MCF 10A (cell line): ENCODE measurements at regions of chr3 and their contacts with region 1.

Region 1: DNA sequence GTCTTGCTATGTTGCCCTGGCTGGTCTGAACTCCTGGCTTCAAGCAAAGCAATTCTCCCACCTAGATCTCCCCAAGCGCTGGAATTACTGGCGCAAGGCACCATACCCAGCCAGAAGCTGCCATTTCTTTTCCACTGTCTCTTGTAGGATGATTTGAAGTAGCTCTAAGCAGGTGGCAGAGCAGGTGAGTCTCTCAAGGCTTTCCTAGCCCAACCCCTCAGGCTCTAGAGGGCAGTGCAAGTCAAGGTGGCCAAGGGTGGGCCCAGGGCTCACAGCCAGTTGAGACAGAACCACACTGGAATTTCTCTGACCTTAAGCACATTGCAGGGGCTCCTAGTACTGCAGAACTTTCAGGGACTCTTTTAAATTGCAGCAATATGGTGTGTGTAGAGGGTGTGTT is 15.6 kb upstream of the DAG1 start:
- DNase-seq: peak; percentile 68
- H3K4me3 Mint-ChIP-seq: no peak overlapping the region
- H3K27ac Mint-ChIP-seq: no peak overlapping the region
- H3K4me1 Mint-ChIP-seq: peaks cover 10% of the 10 kb centered on the region
- H3K27me3 Mint-ChIP-seq: no peaks in the 10 kb centered on the region
- CTCF ChIP-seq: no peak

Region 2: DNA sequence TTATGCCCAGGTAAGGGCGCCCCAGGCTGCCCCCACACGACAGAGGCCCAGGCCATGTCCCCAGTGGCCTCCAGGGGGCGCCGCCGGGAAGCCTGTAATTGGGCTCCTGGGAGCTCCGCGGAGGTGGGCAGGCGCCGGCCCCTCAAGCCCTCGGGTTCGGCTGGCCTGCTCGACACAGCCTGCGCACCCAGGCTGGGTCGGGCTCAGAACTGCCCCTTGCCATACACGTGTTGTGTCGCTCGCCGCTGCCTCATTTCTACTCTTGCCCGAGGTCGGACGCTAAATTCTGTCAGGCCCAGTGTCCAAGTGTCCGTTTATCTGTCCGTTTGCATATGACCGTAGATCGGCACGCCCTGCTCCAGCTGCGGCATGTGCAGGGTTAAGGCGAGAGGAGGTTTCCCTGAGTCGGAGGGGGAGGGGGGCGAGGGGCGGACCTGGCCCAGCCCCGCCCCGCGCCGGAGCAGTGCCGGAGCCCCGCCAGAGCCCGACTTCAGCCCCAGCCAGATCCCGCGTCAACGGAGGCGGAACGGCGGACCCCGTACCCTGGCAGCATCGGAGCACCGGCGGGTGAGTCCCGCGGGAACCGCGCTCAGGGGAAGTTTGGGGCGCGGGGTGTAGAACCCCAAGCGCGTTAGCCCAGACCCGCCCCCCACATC is 283.2 kb before region 1 on chr3 and contains the start of gene KLHDC8B:
- CTCF ChIA-PET with region 1: interaction called, 4 read pairs
- POLR2A ChIA-PET with region 1: interaction called, 3 read pairs
- intact Hi-C with region 1: loop called (anchors 1 kb)
- DNase-seq: peak; percentile 82
- H3K4me3 Mint-ChIP-seq: peak within 1 kb of the TSS; percentile 73
- H3K27ac Mint-ChIP-seq: peak within 1 kb of the TSS; percentile 89
- H3K4me1 Mint-ChIP-seq: peaks cover 6% of the 10 kb centered on the region
- H3K27me3 Mint-ChIP-seq: no peaks in the 10 kb centered on the region
- CTCF ChIP-seq: peak; percentile 95
- total RNA-seq, gene KLHDC8B: 1.7 and 2.4 TPM in 2 replicates

Region 3: GRCh38 chr3:49305608-49306007 is 148.8 kb before region 1 on chr3:
- CTCF ChIA-PET with region 1: no interaction called
- POLR2A ChIA-PET with region 1: no interaction called
- intact Hi-C with region 1: no loop called
- DNase-seq: no peak
- H3K4me3 Mint-ChIP-seq: no peak overlapping the region
- H3K27ac Mint-ChIP-seq: no peak overlapping the region
- H3K4me1 Mint-ChIP-seq: no peaks in the 10 kb centered on the region
- H3K27me3 Mint-ChIP-seq: no peaks in the 10 kb centered on the region
- CTCF ChIP-seq: no peak

Region 4: DNA sequence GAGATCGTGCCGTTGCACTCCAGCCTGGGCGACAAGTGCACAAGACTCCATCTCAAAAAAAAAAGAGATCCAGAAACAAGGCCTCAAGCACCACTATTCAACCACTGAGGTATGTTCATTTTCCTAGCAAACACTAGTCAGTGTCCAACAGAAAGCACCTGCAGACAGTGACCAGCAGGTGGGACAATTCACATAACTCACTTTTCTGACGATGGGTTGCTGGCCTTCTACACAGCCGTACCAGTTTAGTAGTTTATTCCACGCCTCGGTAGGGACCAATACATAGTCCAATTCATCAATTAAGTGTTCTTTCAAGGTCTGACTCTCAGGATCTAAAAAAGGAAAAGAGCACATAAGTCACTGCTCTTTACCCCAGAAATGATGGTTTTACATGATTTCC is 127.0 kb before region 1 on chr3:
- CTCF ChIA-PET with region 1: interaction called, 5 read pairs
- POLR2A ChIA-PET with region 1: no interaction called
- intact Hi-C with region 1: loop called (anchors 1 kb)
- DNase-seq: peak; percentile 37
- H3K4me3 Mint-ChIP-seq: no peak overlapping the region
- H3K27ac Mint-ChIP-seq: no peak overlapping the region
- H3K4me1 Mint-ChIP-seq: no peaks in the 10 kb centered on the region
- H3K27me3 Mint-ChIP-seq: no peaks in the 10 kb centered on the region
- CTCF ChIP-seq: no peak

Region 5: GRCh38 chr3:49351521-49352011 is 102.9 kb before region 1 on chr3:
- CTCF ChIA-PET with region 1: interaction called, 10 read pairs
- POLR2A ChIA-PET with region 1: no interaction called
- intact Hi-C with region 1: no loop called
- DNase-seq: peak; percentile 76
- H3K4me3 Mint-ChIP-seq: peak overlapping the region; percentile 45
- H3K27ac Mint-ChIP-seq: peak overlapping the region; percentile 82
- H3K4me1 Mint-ChIP-seq: peaks cover 40% of the 10 kb centered on the region
- H3K27me3 Mint-ChIP-seq: no peaks in the 10 kb centered on the region
- CTCF ChIP-seq: no peak

Region 6: DNA sequence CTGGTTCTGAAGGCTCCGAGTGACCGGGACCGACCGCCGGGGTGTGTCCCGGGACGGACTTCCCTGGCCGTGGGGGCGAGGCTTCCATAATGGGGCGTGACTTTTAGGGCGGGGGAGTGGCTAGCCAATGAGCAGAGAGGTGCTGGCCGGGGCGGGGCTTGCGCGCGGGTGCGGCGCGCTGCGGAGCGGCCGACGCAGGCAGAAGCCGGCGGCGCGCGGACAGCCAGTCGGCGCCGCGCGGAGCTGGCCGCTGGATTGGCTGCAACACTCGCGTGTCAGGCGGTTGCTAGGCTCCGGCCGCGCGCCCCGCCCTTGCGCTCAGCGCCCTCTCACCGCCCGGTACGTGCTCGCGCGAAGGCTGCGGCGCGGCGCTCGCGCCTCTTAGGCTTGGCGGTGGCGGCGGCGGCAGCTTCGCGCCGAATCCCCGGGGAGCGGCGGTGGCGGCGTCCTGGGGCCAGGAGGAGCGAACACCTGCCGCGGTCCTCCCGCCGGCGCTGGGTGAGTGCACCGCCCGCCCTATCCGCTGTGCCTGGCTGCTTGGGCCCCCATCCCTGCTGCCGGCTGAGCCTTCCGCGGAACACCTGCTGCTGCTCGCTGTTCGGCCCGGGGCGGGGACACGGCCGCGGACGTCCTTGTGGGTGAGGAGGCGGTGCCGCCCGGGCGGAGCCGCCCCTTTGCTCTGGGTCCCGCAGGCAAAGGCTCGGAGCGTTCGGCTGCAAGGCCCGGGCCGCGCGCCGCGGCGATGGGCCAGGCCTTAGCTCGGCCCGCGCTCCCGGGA is 15.7 kb after region 1 on chr3 and contains the start of gene DAG1:
- CTCF ChIA-PET with region 1: interaction called, 6 read pairs
- POLR2A ChIA-PET with region 1: interaction called, 28 read pairs
- intact Hi-C with region 1: no loop called
- DNase-seq: peak; percentile 96
- H3K4me3 Mint-ChIP-seq: peak within 1 kb of the TSS; percentile 89
- H3K27ac Mint-ChIP-seq: peak within 1 kb of the TSS; percentile 88
- H3K4me1 Mint-ChIP-seq: peaks cover 19% of the 10 kb centered on the region
- H3K27me3 Mint-ChIP-seq: no peaks in the 10 kb centered on the region
- CTCF ChIP-seq: no peak
- total RNA-seq, gene DAG1: 40.3 and 49.9 TPM in 2 replicates